Heart left ventricle (tissue), 16 donors: ENCODE measurements at regions of chr1 and their contacts with region 1.

Region 1: DNA sequence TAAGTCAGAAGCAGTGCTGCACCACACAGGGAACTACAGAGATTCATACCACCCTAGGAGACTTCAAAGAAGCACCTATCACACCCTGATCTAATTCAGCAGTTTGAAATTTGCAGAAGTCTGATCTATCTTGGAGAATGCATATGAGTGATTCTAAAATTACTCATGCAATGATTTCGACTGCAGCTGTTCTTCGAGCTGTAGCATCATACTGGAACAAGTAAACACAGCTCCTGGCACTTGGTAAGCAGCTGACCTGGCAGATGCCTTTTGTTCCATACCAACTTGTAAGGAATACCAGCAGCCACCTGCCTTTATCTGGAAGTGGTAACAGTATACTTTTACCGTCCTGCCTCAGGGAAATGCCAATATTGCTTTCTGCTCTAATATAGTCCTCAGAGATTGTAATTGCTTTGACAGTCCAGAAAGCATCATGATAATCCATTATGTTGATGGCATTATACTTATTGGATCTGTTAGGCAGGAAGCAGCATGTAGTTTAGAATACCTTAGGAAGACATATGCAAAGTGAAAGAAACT is 25.7 kb downstream of the AADACL4 start:
- DNase-seq: no peak
- ATAC-seq: no peak
- H3K4me3 ChIP-seq: no peak overlapping the region
- H3K27ac ChIP-seq: no peak overlapping the region
- H3K4me1 ChIP-seq: no peaks in the 10 kb centered on the region
- H3K27me3 ChIP-seq: no peaks in the 10 kb centered on the region
- CTCF ChIP-seq: no peak
- POLR2A ChIP-seq: no peak

Region 2: GRCh38 chr1:12113433-12114339 is 555.9 kb before region 1 on chr1:
- intact Hi-C with region 1: loop called in 1 of 10 experiments (anchors 10 kb)
- DNase-seq: no peak
- ATAC-seq: peak in 1 of 4 donors; percentile 11
- H3K4me3 ChIP-seq: no peak overlapping the region
- H3K27ac ChIP-seq: peak overlapping the region in 6 of 12 donors; percentile 26 to 83 (median 50)
- H3K4me1 ChIP-seq: peaks cover 0 to 13% (median 2%) of the 10 kb centered on the region in 12 donors
- H3K27me3 ChIP-seq: no peaks in the 10 kb centered on the region
- CTCF ChIP-seq: no peak
- POLR2A ChIP-seq: no peak

Region 3: DNA sequence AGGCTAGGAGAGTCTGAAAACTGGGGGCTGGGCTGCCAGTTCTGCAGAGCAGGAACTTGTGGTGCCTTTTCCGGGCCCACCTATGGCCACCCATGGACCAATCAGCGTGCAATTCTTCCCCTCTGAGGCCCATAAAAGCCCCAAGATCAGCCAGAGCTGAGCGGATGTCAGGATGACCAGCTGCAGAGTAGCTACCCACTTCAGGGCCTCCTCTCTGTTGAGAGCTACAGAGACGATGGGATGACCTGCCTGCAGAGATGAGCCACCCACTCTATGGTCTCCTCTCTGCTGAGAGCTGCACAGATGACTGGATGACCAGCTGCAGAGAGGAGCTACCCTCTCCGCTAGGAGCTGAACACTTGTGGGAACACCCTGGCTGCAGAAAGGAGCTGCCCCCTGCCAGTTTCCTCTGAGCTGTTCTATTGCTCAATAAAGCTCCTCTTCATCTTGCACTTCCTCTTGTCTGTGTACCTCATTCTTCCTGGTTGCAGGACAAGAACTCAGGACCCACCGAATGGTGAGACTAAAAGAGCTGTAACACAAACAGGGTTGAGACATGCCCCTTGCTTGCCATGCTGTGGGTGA is 38.6 kb before region 1 on chr1:
- intact Hi-C with region 1: no loop called
- DNase-seq: no peak
- ATAC-seq: peak in 1 of 4 donors; percentile 20
- H3K4me3 ChIP-seq: no peak overlapping the region
- H3K27ac ChIP-seq: no peak overlapping the region
- H3K4me1 ChIP-seq: peaks cover 0 to 23% (median 8%) of the 10 kb centered on the region in 12 donors
- H3K27me3 ChIP-seq: no peaks in the 10 kb centered on the region
- CTCF ChIP-seq: no peak
- POLR2A ChIP-seq: no peak

Region 4: GRCh38 chr1:12722626-12723025 is 53.0 kb after region 1 on chr1:
- intact Hi-C with region 1: no loop called
- DNase-seq: no peak
- ATAC-seq: no peak
- H3K4me3 ChIP-seq: no peak overlapping the region
- H3K27ac ChIP-seq: no peak overlapping the region
- H3K4me1 ChIP-seq: no peaks in the 10 kb centered on the region
- H3K27me3 ChIP-seq: peaks cover 0 to 15% (median 0%) of the 10 kb centered on the region in 9 donors
- CTCF ChIP-seq: no peak
- POLR2A ChIP-seq: no peak